ENCODE measurements at regions of chr16 and their contacts with region 1.

Region 1: GRCh38 chr16:84746882-84747281 is 47.1 kb downstream of the USP10 start:
- DNase-seq: peak in 2 of 3 donors; percentile 33 to 42
- H3K4me3 ChIP-seq: no peak overlapping the region
- H3K27ac ChIP-seq: no peak overlapping the region
- H3K4me1 ChIP-seq: peaks cover 9 to 30% (median 19%) of the 10 kb centered on the region in 4 experiments
- H3K27me3 ChIP-seq: no peaks in the 10 kb centered on the region

Region 2: DNA sequence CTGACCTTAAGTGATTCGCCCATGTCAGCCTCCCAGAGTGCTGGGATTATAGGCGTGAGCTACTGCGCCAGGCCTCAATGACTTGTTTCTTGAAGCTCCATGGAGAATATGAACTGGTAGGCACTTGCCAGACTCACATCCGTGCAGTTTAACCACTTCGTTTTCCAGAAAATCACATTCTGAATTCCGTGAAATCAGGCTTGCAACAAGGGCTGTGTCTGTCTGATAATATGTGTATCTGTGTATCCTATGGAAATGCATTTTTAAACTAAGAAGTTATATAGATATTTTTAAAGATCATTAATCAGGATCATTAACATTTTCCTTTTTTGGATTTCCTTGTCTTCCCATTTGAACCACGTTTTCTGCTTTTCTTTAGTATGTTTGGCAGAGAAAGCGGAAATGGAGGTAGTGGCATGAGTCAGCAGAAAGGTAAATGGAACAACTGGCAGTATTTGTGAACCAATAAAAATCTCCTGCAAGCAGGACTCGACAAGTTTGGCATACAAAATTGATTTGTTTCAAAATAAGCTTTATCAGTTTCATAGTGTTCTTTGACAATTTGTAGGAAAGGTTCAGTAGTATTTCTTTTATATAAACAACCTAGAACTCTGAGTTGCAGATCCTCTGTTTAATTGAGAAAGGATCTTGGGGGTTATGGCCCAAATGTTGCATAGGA is 14.1 kb before region 1 on chr16:
- CTCF ChIA-PET with region 1: interaction called, 78 read pairs
- POLR2A ChIA-PET with region 1: no interaction called
- DNase-seq: peak; percentile 42 to 76 (median 63)
- H3K4me3 ChIP-seq: peak overlapping the region in 3 of 7 experiments; percentile 32 to 42 (median 38)
- H3K27ac ChIP-seq: peak overlapping the region in 1 of 2 experiments; percentile 77
- H3K4me1 ChIP-seq: peaks cover 25 to 71% (median 47%) of the 10 kb centered on the region in 4 experiments
- H3K27me3 ChIP-seq: no peaks in the 10 kb centered on the region